CD4-positive, alpha-beta memory T cell (primary cell): ENCODE measurements at regions of chr6 and their contacts with region 1.

Region 1: DNA sequence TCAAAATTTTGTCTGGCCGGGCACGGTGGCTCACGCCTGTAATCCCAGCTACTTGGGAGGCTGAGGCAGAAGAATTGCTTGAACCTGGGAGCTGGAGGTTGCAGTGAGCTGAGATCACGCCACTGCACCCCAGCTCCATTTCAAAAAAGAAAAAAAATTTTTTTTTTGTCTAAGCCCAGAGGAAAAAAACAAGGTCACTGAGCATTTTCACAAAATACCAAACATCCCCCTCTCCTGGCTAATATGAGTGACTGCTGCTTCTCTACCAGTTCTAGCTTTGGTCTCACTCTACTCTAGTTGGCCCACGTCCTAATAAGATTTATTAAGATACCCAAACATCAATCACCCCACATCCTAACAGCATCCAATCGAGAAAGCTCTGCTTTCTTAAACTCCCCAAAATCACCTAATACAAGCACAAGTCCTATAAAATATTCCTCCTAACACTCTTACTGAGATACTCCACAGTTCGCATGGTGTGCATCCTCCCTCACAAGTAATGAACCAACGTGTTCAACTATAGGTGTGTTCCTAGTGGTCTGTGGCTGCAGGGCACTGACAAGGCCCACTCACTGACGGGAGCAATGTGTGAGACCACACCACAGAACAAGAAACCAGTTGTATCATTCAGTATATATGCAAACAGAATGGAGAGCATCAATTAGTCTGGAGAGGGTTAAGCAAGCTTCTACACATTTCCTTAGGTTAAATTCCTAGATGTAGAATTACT is 64.2 kb downstream of the FKBP5 start:
- DNase-seq: peak in 4 of 5 donors; percentile 62 to 66 (median 64)
- H3K4me3 ChIP-seq: no peak overlapping the region
- H3K4me3 Mint-ChIP-seq: peak overlapping the region in 6 of 8 donors; percentile 1 to 68 (median 46)
- H3K27ac ChIP-seq: no peak overlapping the region
- H3K27ac Mint-ChIP-seq: peak overlapping the region; percentile 12 to 91 (median 80)
- H3K4me1 ChIP-seq: peaks cover 42% of the 10 kb centered on the region
- H3K4me1 Mint-ChIP-seq: peaks cover 18 to 42% (median 28%) of the 10 kb centered on the region in 4 donors
- H3K27me3 ChIP-seq: no peaks in the 10 kb centered on the region
- H3K27me3 Mint-ChIP-seq: no peaks in the 10 kb centered on the region

Region 2: GRCh38 chr6:35503534-35503933 is 121.0 kb before region 1 on chr6:
- CTCF ChIA-PET with region 1: no interaction called
- POLR2A ChIA-PET with region 1: no interaction called
- intact Hi-C with region 1: no loop called
- DNase-seq: no peak
- H3K4me3 ChIP-seq: no peak overlapping the region
- H3K4me3 Mint-ChIP-seq: no peak overlapping the region
- H3K27ac ChIP-seq: no peak overlapping the region
- H3K27ac Mint-ChIP-seq: no peak overlapping the region
- H3K4me1 ChIP-seq: peaks cover 2% of the 10 kb centered on the region
- H3K4me1 Mint-ChIP-seq: peaks cover 2 to 4% (median 3%) of the 10 kb centered on the region in 4 donors
- H3K27me3 ChIP-seq: no peaks in the 10 kb centered on the region
- H3K27me3 Mint-ChIP-seq: peaks cover 7 to 22% of the 10 kb centered on the region in 2 donors

Region 3: GRCh38 chr6:35522660-35523658 is 101.5 kb before region 1 on chr6:
- CTCF ChIA-PET with region 1: interaction called, 52 read pairs
- POLR2A ChIA-PET with region 1: interaction called, 3 read pairs
- intact Hi-C with region 1: loop called (anchors 1 kb)
- DNase-seq: peak; percentile 76 to 84 (median 82)
- H3K4me3 ChIP-seq: peak overlapping the region in 1 of 2 donors; percentile 41
- H3K4me3 Mint-ChIP-seq: peak overlapping the region; percentile 20 to 81 (median 75)
- H3K27ac ChIP-seq: no peak overlapping the region
- H3K27ac Mint-ChIP-seq: peak overlapping the region; percentile 76 to 93 (median 86)
- H3K4me1 ChIP-seq: peaks cover 21% of the 10 kb centered on the region
- H3K4me1 Mint-ChIP-seq: peaks cover 14 to 34% (median 21%) of the 10 kb centered on the region in 4 donors
- H3K27me3 ChIP-seq: no peaks in the 10 kb centered on the region
- H3K27me3 Mint-ChIP-seq: no peaks in the 10 kb centered on the region

Region 4: GRCh38 chr6:35576682-35577081 is 47.8 kb before region 1 on chr6:
- CTCF ChIA-PET with region 1: interaction called, 490 read pairs
- POLR2A ChIA-PET with region 1: interaction called, 4 read pairs
- intact Hi-C with region 1: no loop called
- DNase-seq: no peak
- H3K4me3 ChIP-seq: no peak overlapping the region
- H3K4me3 Mint-ChIP-seq: no peak overlapping the region
- H3K27ac ChIP-seq: no peak overlapping the region
- H3K27ac Mint-ChIP-seq: peak overlapping the region in 3 of 7 donors; percentile 27 to 78 (median 37)
- H3K4me1 ChIP-seq: no peaks in the 10 kb centered on the region
- H3K4me1 Mint-ChIP-seq: peaks cover 3 to 6% (median 5%) of the 10 kb centered on the region in 4 donors
- H3K27me3 ChIP-seq: no peaks in the 10 kb centered on the region
- H3K27me3 Mint-ChIP-seq: no peaks in the 10 kb centered on the region

Region 5: GRCh38 chr6:35590622-35591066 is 33.9 kb before region 1 on chr6:
- CTCF ChIA-PET with region 1: interaction called, 490 read pairs
- POLR2A ChIA-PET with region 1: interaction called, 26 read pairs
- intact Hi-C with region 1: no loop called
- DNase-seq: no peak
- H3K4me3 ChIP-seq: no peak overlapping the region
- H3K4me3 Mint-ChIP-seq: peak overlapping the region in 2 of 8 donors; percentile 48 to 68
- H3K27ac ChIP-seq: no peak overlapping the region
- H3K27ac Mint-ChIP-seq: peak overlapping the region in 6 of 7 donors; percentile 52 to 90 (median 82)
- H3K4me1 ChIP-seq: peaks cover 86% of the 10 kb centered on the region
- H3K4me1 Mint-ChIP-seq: peaks cover 63 to 90% (median 76%) of the 10 kb centered on the region in 4 donors
- H3K27me3 ChIP-seq: no peaks in the 10 kb centered on the region
- H3K27me3 Mint-ChIP-seq: no peaks in the 10 kb centered on the region

Region 6: DNA sequence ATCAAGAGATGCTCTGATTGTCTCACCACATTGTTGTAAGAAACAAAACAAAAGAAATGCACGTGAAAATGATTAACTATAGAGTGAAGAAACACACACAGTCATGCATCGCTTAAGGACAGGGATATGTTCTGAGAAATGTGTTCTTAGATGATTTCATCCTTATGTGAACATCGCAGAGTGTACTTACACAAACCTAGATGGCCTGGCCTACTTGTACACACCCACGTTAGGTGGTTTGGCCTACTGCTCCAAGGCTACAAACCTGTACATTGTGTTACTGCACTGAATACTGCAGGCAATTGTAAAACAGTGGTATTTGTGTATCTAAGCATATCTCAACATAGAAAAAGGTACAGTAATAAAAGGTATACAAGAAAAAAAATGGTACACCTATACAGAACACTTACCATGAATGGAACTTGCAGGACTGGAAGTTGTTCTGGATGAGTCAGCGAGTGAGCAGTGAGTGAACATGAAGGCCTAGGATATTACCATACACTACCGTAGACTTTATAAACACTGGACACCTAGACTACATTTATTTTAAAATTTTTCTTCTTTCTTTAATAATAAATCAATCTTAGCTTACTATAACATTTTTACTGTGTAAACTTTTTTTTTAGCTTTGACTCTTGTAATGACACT is 15.6 kb after region 1 on chr6:
- CTCF ChIA-PET with region 1: interaction called, 27 read pairs
- POLR2A ChIA-PET with region 1: interaction called, 9 read pairs
- intact Hi-C with region 1: no loop called
- DNase-seq: no peak
- H3K4me3 ChIP-seq: no peak overlapping the region
- H3K4me3 Mint-ChIP-seq: no peak overlapping the region
- H3K27ac ChIP-seq: no peak overlapping the region
- H3K27ac Mint-ChIP-seq: peak overlapping the region in 4 of 7 donors; percentile 7 to 78 (median 28)
- H3K4me1 ChIP-seq: peaks cover 64% of the 10 kb centered on the region
- H3K4me1 Mint-ChIP-seq: peaks cover 35 to 71% (median 60%) of the 10 kb centered on the region in 4 donors
- H3K27me3 ChIP-seq: no peaks in the 10 kb centered on the region
- H3K27me3 Mint-ChIP-seq: no peaks in the 10 kb centered on the region

Region 7: DNA sequence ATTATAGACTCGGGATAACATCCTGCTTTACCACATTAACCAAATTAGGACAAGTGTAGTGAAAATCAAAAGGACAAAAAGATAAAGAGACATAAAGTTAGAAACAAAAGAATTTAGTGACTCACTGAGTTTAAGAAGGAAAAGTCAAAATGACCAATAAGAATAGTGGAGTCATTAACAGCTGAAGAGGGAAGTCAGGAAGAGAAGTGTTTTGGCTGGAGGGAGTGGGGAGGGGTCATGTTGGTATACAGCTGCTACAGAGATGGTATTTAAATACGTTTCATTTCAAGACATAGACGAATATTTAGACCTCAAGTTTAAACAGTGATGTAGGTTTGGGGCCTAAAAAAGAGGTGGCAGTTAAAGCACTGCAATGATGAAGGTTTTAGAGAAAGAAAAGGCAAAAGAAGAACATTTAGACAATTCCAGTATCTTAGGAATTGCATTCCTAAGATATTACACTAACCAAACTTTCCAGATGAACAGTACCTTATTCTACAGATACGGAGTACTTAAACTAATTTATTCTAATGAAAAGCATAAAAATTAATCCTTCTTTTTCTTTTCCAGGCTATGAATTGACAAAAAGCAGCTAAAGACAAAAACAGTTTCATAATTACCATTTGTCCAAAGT is 53.6 kb after region 1 on chr6:
- CTCF ChIA-PET with region 1: interaction called, 12 read pairs
- POLR2A ChIA-PET with region 1: interaction called, 4 read pairs
- intact Hi-C with region 1: no loop called
- DNase-seq: no peak
- H3K4me3 ChIP-seq: no peak overlapping the region
- H3K4me3 Mint-ChIP-seq: peak overlapping the region; percentile 22 to 75 (median 43)
- H3K27ac ChIP-seq: no peak overlapping the region
- H3K27ac Mint-ChIP-seq: peak overlapping the region; percentile 39 to 91 (median 81)
- H3K4me1 ChIP-seq: peaks cover 95% of the 10 kb centered on the region
- H3K4me1 Mint-ChIP-seq: peaks cover 67 to 93% (median 79%) of the 10 kb centered on the region in 4 donors
- H3K27me3 ChIP-seq: no peaks in the 10 kb centered on the region
- H3K27me3 Mint-ChIP-seq: no peaks in the 10 kb centered on the region

Region 8: DNA sequence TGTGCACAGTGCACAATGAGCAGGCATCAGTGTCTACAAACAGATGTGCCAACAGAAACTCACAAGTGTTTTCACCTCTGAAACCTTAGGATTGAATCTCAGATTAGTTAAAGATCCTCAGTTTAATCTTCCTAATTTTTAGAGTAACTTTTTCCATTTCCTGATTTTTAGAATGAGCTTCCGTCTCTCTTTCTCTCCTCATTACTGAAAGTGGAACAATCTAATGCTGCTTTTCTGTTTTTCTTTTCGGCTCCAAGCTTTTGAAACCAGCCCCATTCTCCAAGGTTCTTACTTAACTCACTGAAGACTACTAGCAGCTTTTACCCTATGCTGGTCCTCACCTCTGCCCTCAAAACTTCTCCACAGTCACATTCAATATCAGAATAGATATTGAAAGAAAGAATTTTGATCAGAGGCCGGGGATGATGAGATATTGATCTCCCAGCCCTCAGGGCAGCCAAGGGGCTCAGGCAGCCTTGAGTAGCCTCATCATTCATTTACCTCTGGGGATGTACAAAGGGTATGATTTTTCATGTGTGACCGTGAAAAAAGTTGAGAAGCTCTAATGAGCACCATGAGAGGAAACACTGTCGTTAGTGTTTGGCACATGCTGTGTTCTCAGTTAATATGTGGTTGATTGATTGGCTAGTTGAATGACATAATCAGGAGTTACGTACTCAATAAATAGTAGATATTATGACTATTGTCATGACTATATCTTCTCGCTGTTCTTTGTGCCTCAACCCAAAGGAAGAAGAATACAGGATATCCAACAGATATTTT is 934.7 kb after region 1 on chr6:
- CTCF ChIA-PET with region 1: no interaction called
- POLR2A ChIA-PET with region 1: no interaction called
- intact Hi-C with region 1: no loop called
- DNase-seq: no peak
- H3K4me3 ChIP-seq: no peak overlapping the region
- H3K4me3 Mint-ChIP-seq: no peak overlapping the region
- H3K27ac ChIP-seq: no peak overlapping the region
- H3K27ac Mint-ChIP-seq: peak overlapping the region in 1 of 7 donors; percentile 7
- H3K4me1 ChIP-seq: no peaks in the 10 kb centered on the region
- H3K4me1 Mint-ChIP-seq: peaks cover 0 to 4% (median 2%) of the 10 kb centered on the region in 4 donors
- H3K27me3 ChIP-seq: no peaks in the 10 kb centered on the region
- H3K27me3 Mint-ChIP-seq: peaks cover 0 to 1% of the 10 kb centered on the region in 2 donors